GM12878 (cell line): ENCODE measurements at regions of chr18 and their contacts with region 1.

Region 1: DNA sequence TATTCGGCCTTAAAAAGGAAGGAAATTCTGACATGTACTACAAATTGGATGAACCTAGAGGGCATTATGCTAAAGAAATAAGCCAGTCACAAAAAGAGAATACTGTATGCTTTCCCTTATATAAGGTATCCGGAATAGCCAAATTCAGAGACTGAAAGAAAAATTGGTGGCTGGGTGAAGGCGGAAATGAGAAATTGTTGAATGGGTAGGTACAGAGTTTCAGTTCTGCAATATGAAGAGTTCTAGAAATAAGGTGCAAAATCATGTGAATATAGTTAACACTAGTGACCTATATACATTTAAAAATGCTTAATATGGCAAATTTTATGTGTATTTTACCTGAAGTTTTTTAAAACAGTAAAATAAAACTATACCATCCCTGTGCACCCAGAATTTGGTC is 43.1 kb downstream of the RMP24 start:
- DNase-seq: peak; percentile 66
- ATAC-seq: peak; percentile 90
- H3K4me3 ChIP-seq: no peak overlapping the region
- H3K27ac ChIP-seq: no peak overlapping the region
- H3K4me1 ChIP-seq: peaks cover 14% of the 10 kb centered on the region
- H3K27me3 ChIP-seq: no peaks in the 10 kb centered on the region
- CTCF ChIP-seq: no peak
- EP300 ChIP-seq: peak in 1 of 2 experiments; percentile 93; a peak in 2 of 4 replicates
- POLR2A ChIP-seq: no peak
- RAD21 ChIP-seq: no peak

Region 2: DNA sequence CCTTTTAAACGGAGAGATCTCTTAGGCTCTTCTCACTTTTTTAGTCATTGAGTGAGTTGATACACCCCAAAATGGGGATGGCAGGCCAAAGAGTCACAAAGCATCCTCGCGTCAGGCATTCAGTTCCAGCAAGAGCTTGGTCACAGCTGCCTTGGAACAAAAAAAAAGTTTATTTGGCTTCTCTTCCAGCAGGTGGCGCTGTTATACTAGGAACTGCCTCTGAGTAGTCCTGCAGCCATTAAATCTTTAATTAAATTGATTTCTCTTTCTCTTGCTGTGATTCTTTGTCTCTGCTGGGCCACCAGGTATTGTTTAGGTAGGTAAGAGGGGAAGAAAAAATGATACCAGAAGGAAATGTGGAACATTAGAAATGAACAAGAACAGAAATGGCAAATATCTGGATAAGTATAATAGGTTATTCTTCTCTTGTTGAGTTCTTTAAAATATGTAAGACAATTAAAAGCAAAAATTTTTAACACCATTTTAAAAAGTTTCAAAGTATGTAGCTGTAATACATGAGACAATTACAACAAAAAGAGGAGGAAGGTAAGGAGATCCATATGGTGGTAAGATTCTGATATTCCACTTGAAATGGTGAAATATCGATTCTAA is 259.0 kb before region 1 on chr18:
- CTCF ChIA-PET with region 1: interaction called, 17 read pairs
- POLR2A ChIA-PET with region 1: no interaction called
- RAD21 ChIA-PET with region 1: interaction called, 6 read pairs
- SMC1A ChIA-PET with region 1: interaction called, 10 read pairs
- in situ Hi-C with region 1: no loop called
- intact Hi-C with region 1: loop called (anchors 1 kb)
- DNase-seq: no peak
- ATAC-seq: peak; percentile 93
- H3K4me3 ChIP-seq: no peak overlapping the region
- H3K27ac ChIP-seq: no peak overlapping the region
- H3K4me1 ChIP-seq: no peaks in the 10 kb centered on the region
- H3K27me3 ChIP-seq: peaks cover 0 to 2% of the 10 kb centered on the region in 2 experiments; a peak in 2 of 4 replicates
- CTCF ChIP-seq: peak; percentile 51 to 84 (median 53); a peak in 5 of 6 replicates
- EP300 ChIP-seq: no peak
- POLR2A ChIP-seq: no peak
- RAD21 ChIP-seq: peak; percentile 92

Region 3: DNA sequence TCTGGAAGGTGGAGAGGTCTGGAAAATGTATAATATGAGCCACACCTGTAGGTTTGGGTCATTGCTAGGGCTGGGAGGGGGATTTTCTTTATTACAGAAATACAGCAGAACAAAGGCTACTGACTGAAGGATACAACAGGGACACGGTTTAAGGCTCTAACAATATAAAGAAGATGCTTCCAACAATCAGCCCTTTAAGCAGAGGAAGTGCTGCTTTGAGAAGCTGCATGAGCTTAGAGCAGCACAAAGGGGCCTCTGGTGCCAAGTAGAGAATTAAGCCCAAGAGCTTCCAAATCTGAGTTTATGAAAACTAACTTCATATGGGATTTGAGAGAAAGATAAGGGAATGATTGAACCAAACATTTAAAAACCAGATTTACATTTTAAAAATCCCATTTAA is 217.7 kb before region 1 on chr18:
- CTCF ChIA-PET with region 1: no interaction called
- POLR2A ChIA-PET with region 1: no interaction called
- RAD21 ChIA-PET with region 1: no interaction called
- SMC1A ChIA-PET with region 1: no interaction called
- in situ Hi-C with region 1: no loop called
- intact Hi-C with region 1: no loop called
- DNase-seq: no peak
- ATAC-seq: no peak
- H3K4me3 ChIP-seq: no peak overlapping the region
- H3K27ac ChIP-seq: no peak overlapping the region
- H3K4me1 ChIP-seq: no peaks in the 10 kb centered on the region
- H3K27me3 ChIP-seq: no peaks in the 10 kb centered on the region; a peak in 1 of 4 replicates
- CTCF ChIP-seq: no peak
- EP300 ChIP-seq: no peak
- POLR2A ChIP-seq: no peak
- RAD21 ChIP-seq: no peak

Region 4: GRCh38 chr18:36031407-36031806 is 15.8 kb after region 1 on chr18:
- CTCF ChIA-PET with region 1: interaction called, 14 read pairs
- POLR2A ChIA-PET with region 1: no interaction called
- RAD21 ChIA-PET with region 1: interaction called, 8 read pairs
- SMC1A ChIA-PET with region 1: interaction called, 3 read pairs
- in situ Hi-C with region 1: no loop called
- intact Hi-C with region 1: no loop called
- DNase-seq: no peak
- ATAC-seq: no peak
- H3K4me3 ChIP-seq: no peak overlapping the region
- H3K27ac ChIP-seq: no peak overlapping the region
- H3K4me1 ChIP-seq: no peaks in the 10 kb centered on the region
- H3K27me3 ChIP-seq: no peaks in the 10 kb centered on the region
- CTCF ChIP-seq: no peak
- EP300 ChIP-seq: no peak
- POLR2A ChIP-seq: no peak
- RAD21 ChIP-seq: no peak

Region 5: DNA sequence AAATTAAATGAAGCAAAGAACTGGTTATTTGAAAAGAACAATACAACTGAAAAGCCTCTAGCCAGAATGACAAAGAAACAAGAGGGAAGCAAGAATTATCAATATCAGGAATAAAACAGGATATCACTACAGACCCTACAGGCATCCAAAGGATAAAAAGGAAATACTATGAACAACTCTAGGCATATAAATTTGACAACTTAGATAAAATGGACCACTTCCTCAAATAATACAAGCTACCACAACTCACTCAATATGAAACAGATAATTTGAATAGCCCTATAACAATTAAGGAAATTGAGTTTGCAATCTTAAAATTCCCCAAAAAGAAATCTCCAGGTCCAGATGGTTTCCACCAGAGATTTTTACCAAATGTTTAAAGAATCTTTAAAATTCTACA is 31.9 kb after region 1 on chr18:
- CTCF ChIA-PET with region 1: no interaction called
- POLR2A ChIA-PET with region 1: no interaction called
- RAD21 ChIA-PET with region 1: no interaction called
- SMC1A ChIA-PET with region 1: no interaction called
- in situ Hi-C with region 1: no loop called
- intact Hi-C with region 1: no loop called
- DNase-seq: no peak
- ATAC-seq: peak; percentile 66
- H3K4me3 ChIP-seq: no peak overlapping the region
- H3K27ac ChIP-seq: no peak overlapping the region
- H3K4me1 ChIP-seq: no peaks in the 10 kb centered on the region; the same call in 1 of the 2 replicates
- H3K27me3 ChIP-seq: no peaks in the 10 kb centered on the region
- CTCF ChIP-seq: no peak
- EP300 ChIP-seq: no peak
- POLR2A ChIP-seq: no peak
- RAD21 ChIP-seq: no peak

Region 6: GRCh38 chr18:36067055-36067957 is 51.7 kb after region 1 on chr18 and contains the start of gene RPRD1A:
- CTCF ChIA-PET with region 1: interaction called, 18 read pairs
- POLR2A ChIA-PET with region 1: no interaction called
- RAD21 ChIA-PET with region 1: interaction called, 4 read pairs
- SMC1A ChIA-PET with region 1: interaction called, 21 read pairs
- in situ Hi-C with region 1: no loop called
- intact Hi-C with region 1: no loop called
- DNase-seq: peak; percentile 81
- ATAC-seq: peak; percentile 94
- H3K4me3 ChIP-seq: peak within 1 kb of the TSS; percentile 89
- H3K27ac ChIP-seq: peak within 1 kb of the TSS; percentile 72
- H3K4me1 ChIP-seq: no peaks in the 10 kb centered on the region
- H3K27me3 ChIP-seq: no peaks in the 10 kb centered on the region
- CTCF ChIP-seq: no peak
- EP300 ChIP-seq: peak; percentile 11 to 63; a peak in 2 of 4 replicates
- POLR2A ChIP-seq: peak; percentile 91
- RAD21 ChIP-seq: no peak
- polyA plus RNA-seq, gene RPRD1A: 16.2 to 19.1 TPM

Region 7: GRCh38 chr18:36129300-36130038 is 113.8 kb after region 1 on chr18 and contains the starts of genes ELP2 and SLC39A6:
- CTCF ChIA-PET with region 1: interaction called, 20 read pairs
- POLR2A ChIA-PET with region 1: interaction called, 3 read pairs
- RAD21 ChIA-PET with region 1: interaction called, 6 read pairs
- SMC1A ChIA-PET with region 1: interaction called, 5 read pairs
- in situ Hi-C with region 1: no loop called
- intact Hi-C with region 1: loop called (anchors 5 kb)
- DNase-seq: peak; percentile 76
- ATAC-seq: peak; percentile 93
- H3K4me3 ChIP-seq: peak within 1 kb of the TSS; percentile 85
- H3K27ac ChIP-seq: peak within 1 kb of the TSS; percentile 98
- H3K4me1 ChIP-seq: peaks cover 7% of the 10 kb centered on the region; the same call in 1 of the 2 replicates
- H3K27me3 ChIP-seq: no peaks in the 10 kb centered on the region
- CTCF ChIP-seq: 0 out of 6 replicates have a peak, but pooled peaks of 1 of the 3 experiments have one; percentile 1
- EP300 ChIP-seq: no peak
- POLR2A ChIP-seq: peak; percentile 94
- RAD21 ChIP-seq: no peak
- polyA plus RNA-seq, gene ELP2: 90.6 to 90.7 TPM
- polyA plus RNA-seq, gene SLC39A6: 12.4 to 19.5 TPM

Region 8: GRCh38 chr18:36149514-36150289 is 134.1 kb after region 1 on chr18:
- CTCF ChIA-PET with region 1: no interaction called
- POLR2A ChIA-PET with region 1: no interaction called
- RAD21 ChIA-PET with region 1: interaction called, 5 read pairs
- SMC1A ChIA-PET with region 1: interaction called, 9 read pairs
- in situ Hi-C with region 1: no loop called
- intact Hi-C with region 1: loop called (anchors 5 kb)
- DNase-seq: peak; percentile 32
- ATAC-seq: peak; percentile 97
- H3K4me3 ChIP-seq: peak overlapping the region; percentile 3; the same call in 1 of the 2 replicates
- H3K27ac ChIP-seq: peak overlapping the region; percentile 79
- H3K4me1 ChIP-seq: peaks cover 18% of the 10 kb centered on the region
- H3K27me3 ChIP-seq: no peaks in the 10 kb centered on the region
- CTCF ChIP-seq: no peak
- EP300 ChIP-seq: 0 out of 4 replicates have a peak, but pooled peaks of 1 of the 2 experiments have one; percentile 31
- POLR2A ChIP-seq: no peak
- RAD21 ChIP-seq: no peak